A549 (cell line): ENCODE measurements at regions of chr7 and their contacts with region 1.

Region 1: GRCh38 chr7:5396999-5397663 is 26.5 kb downstream of the TNRC18 start:
- DNase-seq: peak; percentile 96 to 99
- ATAC-seq: peak; percentile 94 to 97
- H3K4me3 ChIP-seq: peak overlapping the region; percentile 74
- H3K27ac ChIP-seq: peak overlapping the region; percentile 96 to 98
- H3K4me1 ChIP-seq: peaks cover 21% of the 10 kb centered on the region
- CTCF ChIP-seq: no peak
- EP300 ChIP-seq: peak in 1 of 2 experiments; percentile 42; a peak in 2 of 5 replicates
- POLR2A ChIP-seq: peak; percentile 62
- RAD21 ChIP-seq: no peak; a peak in 1 of 5 replicates

Region 2: DNA sequence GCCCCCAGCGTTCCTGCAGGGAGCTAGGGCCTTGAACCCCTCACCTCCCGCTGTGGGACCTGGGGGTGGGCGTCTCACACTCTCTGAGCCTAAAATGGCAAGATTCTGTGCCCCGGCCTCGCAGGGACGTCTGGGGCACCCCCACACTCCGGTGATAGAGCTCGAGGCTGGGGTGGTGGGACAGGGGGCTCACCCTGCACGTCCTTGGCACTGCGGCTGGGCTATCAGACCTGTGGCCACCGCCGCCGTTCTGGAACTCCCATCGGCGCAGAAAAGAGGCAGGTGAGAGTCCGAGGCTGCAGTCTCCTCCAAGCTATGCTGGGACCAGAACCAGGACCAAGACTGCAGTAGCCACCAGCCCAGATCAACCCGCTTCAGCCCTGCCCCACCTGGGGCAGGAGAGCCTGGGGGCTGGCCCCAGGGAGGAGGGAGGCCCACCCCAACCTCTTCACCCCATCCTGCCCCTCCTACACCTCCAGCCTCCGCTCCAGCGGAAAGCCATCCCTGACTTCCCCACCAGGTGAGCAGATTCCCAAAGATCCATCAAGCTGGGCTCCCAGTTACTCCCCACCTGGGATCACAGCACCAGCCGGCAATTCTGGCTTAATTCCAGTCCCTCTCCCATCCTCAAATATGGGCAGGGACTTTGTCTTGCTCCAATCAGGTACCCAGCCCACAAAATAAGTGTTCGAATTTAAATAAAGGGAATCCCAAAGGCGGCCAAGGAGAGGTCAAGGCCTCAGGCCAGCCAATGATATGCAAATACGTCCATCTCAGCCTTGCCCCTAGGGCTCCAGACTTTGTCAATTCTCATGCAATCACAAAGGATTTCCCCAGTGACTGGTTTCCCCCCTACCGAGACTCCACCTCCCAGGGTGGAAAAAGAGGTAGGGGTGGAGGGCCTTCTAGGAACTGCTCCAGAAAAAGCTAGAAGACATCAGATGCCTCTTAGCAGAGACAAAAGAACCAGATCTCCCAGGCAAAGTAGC is 10.1 kb after region 1 on chr7:
- CTCF ChIA-PET with region 1: interaction called, 29 read pairs
- POLR2A ChIA-PET with region 1: interaction called, 10 read pairs
- DNase-seq: no peak
- ATAC-seq: peak; percentile 13 to 34; a peak in 4 of 6 replicates
- H3K4me3 ChIP-seq: no peak overlapping the region
- H3K27ac ChIP-seq: no peak overlapping the region
- H3K4me1 ChIP-seq: peaks cover 16% of the 10 kb centered on the region
- CTCF ChIP-seq: no peak
- EP300 ChIP-seq: no peak
- POLR2A ChIP-seq: no peak
- RAD21 ChIP-seq: no peak

Region 3: DNA sequence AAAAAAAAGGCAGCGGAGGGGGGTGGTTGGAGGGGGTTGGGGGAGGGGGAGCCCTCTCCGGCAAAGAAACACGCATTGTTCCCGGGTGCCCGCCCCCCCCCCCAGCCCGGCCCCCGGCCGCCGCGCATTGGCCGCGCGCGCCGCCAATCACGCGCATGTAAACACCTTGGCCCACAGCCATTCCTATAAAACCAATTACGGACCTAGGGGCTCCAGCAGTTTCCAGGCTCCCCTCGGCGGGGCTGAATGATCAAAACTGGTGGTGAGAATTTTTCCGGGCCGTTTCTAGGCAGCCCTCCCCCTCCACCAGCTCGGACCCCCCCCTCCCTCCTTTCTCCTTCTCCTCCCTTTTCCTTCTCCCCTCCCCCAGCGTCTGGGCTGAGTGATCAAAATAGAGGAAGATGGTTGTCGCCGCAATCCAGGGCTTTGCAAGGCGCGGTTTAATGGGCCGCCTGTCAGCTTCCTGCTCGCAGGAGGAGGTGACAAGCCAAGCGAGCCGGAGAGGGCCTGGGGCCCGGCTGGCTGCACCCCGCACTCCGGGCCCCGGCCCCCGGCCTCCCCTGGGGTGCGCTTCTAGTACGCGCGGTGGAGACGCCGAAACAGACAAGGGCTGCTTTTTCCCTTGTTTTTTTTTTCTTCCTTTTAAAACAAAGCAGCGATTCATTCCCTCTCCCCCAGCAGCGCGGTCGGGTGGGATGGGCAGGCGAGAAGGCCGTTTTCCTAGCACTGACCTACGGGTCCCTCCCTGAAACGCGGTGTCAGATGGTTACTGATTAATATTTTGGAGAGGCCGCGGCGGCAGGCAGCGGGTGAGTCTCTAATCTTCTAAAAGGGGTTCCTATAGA is 26.9 kb after region 1 on chr7:
- CTCF ChIA-PET with region 1: interaction called, 54 read pairs
- POLR2A ChIA-PET with region 1: interaction called, 63 read pairs
- DNase-seq: peak; percentile 80 to 98
- ATAC-seq: peak; percentile 16 to 25
- H3K4me3 ChIP-seq: peak overlapping the region; percentile 74
- H3K27ac ChIP-seq: peak overlapping the region; percentile 88 to 96
- H3K4me1 ChIP-seq: peaks cover 21% of the 10 kb centered on the region
- CTCF ChIP-seq: no peak
- EP300 ChIP-seq: no peak
- POLR2A ChIP-seq: no peak
- RAD21 ChIP-seq: no peak